ENCODE measurements at regions of chr3 and their contacts with region 1.

Region 1: GRCh38 chr3:105518806-105519418 is 152.2 kb downstream of the ALCAM start:
- DNase-seq: peak; percentile 49
- ATAC-seq: peak; percentile 96
- H3K4me3 ChIP-seq: no peak overlapping the region
- H3K27ac ChIP-seq: no peak overlapping the region
- H3K4me1 ChIP-seq: no peaks in the 10 kb centered on the region
- H3K27me3 ChIP-seq: no peaks in the 10 kb centered on the region
- CTCF ChIP-seq: peak; percentile 44 to 67 (median 54); a peak in 5 of 6 replicates
- EP300 ChIP-seq: no peak
- POLR2A ChIP-seq: no peak
- RAD21 ChIP-seq: peak; percentile 85

Region 2: DNA sequence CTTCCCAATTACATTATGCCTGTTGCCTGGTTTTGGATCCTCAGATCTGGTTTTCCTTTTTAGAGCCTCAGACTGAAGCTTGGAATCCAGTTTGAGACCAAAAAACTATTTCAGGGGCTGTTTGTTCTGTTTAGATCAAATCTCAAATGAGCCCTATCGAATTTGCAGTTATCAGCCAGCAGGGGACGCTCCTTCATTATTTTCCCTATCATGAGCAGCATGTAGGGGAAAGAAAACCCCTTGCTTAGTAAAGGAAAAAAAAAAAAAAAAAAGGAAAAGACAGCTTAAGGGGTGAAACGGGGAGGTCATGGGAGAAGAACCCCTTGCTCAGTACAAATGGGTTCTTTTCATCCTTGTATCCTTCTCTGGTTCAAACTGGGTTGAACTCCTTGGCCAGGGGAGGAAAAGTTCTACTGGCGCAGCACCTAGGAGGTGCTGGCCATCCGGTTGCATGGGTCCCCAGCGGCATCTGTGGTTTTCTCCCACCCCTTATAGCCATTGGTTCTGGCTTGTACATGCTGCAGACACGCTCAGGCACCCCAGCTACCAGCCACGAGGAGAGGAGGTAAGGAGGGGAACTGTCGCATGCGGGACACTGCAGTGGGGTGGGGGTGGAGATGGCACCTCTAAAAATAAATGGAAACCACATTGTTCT is 1527.3 kb before region 1 on chr3:
- CTCF ChIA-PET with region 1: no interaction called
- POLR2A ChIA-PET with region 1: no interaction called
- RAD21 ChIA-PET with region 1: no interaction called
- SMC1A ChIA-PET with region 1: no interaction called
- in situ Hi-C with region 1: no loop called
- intact Hi-C with region 1: loop called (anchors 5 kb)
- DNase-seq: no peak
- ATAC-seq: peak; percentile 72
- H3K4me3 ChIP-seq: no peak overlapping the region
- H3K27ac ChIP-seq: no peak overlapping the region
- H3K4me1 ChIP-seq: no peaks in the 10 kb centered on the region
- H3K27me3 ChIP-seq: no peaks in the 10 kb centered on the region
- CTCF ChIP-seq: peak; percentile 46 to 54 (median 54)
- EP300 ChIP-seq: no peak
- POLR2A ChIP-seq: no peak
- RAD21 ChIP-seq: peak; percentile 60

Region 3: DNA sequence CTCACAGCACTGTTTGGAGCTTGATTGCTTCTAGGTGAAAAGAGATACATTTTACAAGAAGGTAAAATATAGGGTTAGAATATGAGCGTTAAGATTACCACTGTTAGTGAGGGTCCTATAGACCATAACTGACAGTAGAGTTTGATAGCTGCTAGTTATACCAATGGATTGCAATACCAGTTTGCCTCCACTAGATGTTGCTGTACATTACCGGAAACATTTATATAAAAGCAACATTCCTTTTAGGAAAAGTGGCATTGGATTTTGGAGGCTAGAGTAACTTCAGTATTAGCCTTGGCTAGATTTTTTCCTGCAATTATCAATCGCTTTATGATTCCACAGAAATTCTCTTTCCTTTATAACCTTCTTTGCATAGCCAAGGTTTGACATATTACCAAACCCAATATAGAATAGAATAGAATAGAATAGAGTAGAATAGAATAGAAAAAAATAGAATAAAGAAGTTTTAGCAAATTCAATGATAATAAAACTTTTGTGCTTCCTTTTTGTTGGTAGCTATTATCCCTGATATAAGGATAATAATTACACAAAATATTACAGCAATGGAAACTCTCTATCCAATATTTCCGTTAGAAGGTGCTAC is 1245.8 kb before region 1 on chr3:
- CTCF ChIA-PET with region 1: interaction called, 8 read pairs
- POLR2A ChIA-PET with region 1: no interaction called
- RAD21 ChIA-PET with region 1: interaction called, 3 read pairs
- SMC1A ChIA-PET with region 1: interaction called, 3 read pairs
- in situ Hi-C with region 1: loop called (anchors 25 kb)
- intact Hi-C with region 1: loop called (anchors 5 kb)
- DNase-seq: no peak
- ATAC-seq: peak; percentile 58
- H3K4me3 ChIP-seq: no peak overlapping the region
- H3K27ac ChIP-seq: no peak overlapping the region
- H3K4me1 ChIP-seq: no peaks in the 10 kb centered on the region
- H3K27me3 ChIP-seq: no peaks in the 10 kb centered on the region
- CTCF ChIP-seq: peak; percentile 75 to 80 (median 77)
- EP300 ChIP-seq: no peak
- POLR2A ChIP-seq: no peak
- RAD21 ChIP-seq: peak; percentile 91

Region 4: GRCh38 chr3:104596551-104596950 is 922.4 kb before region 1 on chr3:
- CTCF ChIA-PET with region 1: interaction called, 20 read pairs
- POLR2A ChIA-PET with region 1: no interaction called
- RAD21 ChIA-PET with region 1: no interaction called
- SMC1A ChIA-PET with region 1: interaction called, 8 read pairs
- in situ Hi-C with region 1: no loop called
- intact Hi-C with region 1: loop called (anchors 5 kb)
- DNase-seq: peak; percentile 20
- ATAC-seq: peak; percentile 91
- H3K4me3 ChIP-seq: no peak overlapping the region
- H3K27ac ChIP-seq: no peak overlapping the region
- H3K4me1 ChIP-seq: no peaks in the 10 kb centered on the region
- H3K27me3 ChIP-seq: no peaks in the 10 kb centered on the region
- CTCF ChIP-seq: peak; percentile 52 to 56 (median 56)
- EP300 ChIP-seq: no peak
- POLR2A ChIP-seq: no peak
- RAD21 ChIP-seq: peak; percentile 78

Region 5: DNA sequence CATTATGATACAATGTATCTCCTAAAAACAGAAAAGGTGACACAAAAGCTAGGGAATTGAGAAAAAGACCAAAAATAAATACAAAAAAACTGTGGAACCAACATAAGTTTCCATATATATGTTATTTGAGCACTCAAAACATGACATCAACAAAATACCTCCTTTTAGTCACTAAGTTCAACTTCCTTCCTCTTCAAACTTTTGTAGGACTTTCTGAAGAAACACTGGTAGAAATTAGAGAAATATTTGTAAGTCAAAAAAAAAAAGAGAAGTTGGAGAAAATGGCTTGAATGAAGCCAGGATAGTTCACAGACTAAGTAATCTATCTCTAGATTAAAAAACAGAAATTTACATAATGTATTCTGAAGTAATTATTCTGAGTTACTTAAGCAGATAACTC is 360.6 kb before region 1 on chr3:
- CTCF ChIA-PET with region 1: no interaction called
- POLR2A ChIA-PET with region 1: no interaction called
- RAD21 ChIA-PET with region 1: no interaction called
- SMC1A ChIA-PET with region 1: no interaction called
- in situ Hi-C with region 1: no loop called
- intact Hi-C with region 1: loop called (anchors 10 kb)
- DNase-seq: no peak
- ATAC-seq: no peak
- H3K4me3 ChIP-seq: no peak overlapping the region
- H3K27ac ChIP-seq: no peak overlapping the region
- H3K4me1 ChIP-seq: no peaks in the 10 kb centered on the region
- H3K27me3 ChIP-seq: no peaks in the 10 kb centered on the region
- CTCF ChIP-seq: no peak
- EP300 ChIP-seq: no peak
- POLR2A ChIP-seq: no peak
- RAD21 ChIP-seq: no peak

Region 6: GRCh38 chr3:105505170-105505569 is 13.7 kb before region 1 on chr3:
- CTCF ChIA-PET with region 1: interaction called, 33 read pairs
- POLR2A ChIA-PET with region 1: no interaction called
- RAD21 ChIA-PET with region 1: interaction called, 9 read pairs
- SMC1A ChIA-PET with region 1: interaction called, 14 read pairs
- in situ Hi-C with region 1: no loop called
- intact Hi-C with region 1: no loop called
- DNase-seq: no peak
- ATAC-seq: no peak
- H3K4me3 ChIP-seq: no peak overlapping the region
- H3K27ac ChIP-seq: no peak overlapping the region
- H3K4me1 ChIP-seq: no peaks in the 10 kb centered on the region
- H3K27me3 ChIP-seq: no peaks in the 10 kb centered on the region
- CTCF ChIP-seq: no peak
- EP300 ChIP-seq: no peak
- POLR2A ChIP-seq: no peak
- RAD21 ChIP-seq: no peak

Region 7: GRCh38 chr3:105564546-105565288 is 45.8 kb after region 1 on chr3:
- CTCF ChIA-PET with region 1: no interaction called
- POLR2A ChIA-PET with region 1: no interaction called
- RAD21 ChIA-PET with region 1: no interaction called
- SMC1A ChIA-PET with region 1: no interaction called
- in situ Hi-C with region 1: no loop called
- intact Hi-C with region 1: no loop called
- DNase-seq: no peak
- ATAC-seq: no peak
- H3K4me3 ChIP-seq: no peak overlapping the region
- H3K27ac ChIP-seq: no peak overlapping the region
- H3K4me1 ChIP-seq: 0 out of 2 replicates have a peak, but pooled peaks cover 2% of the 10 kb centered on the region
- H3K27me3 ChIP-seq: no peaks in the 10 kb centered on the region
- CTCF ChIP-seq: no peak
- EP300 ChIP-seq: no peak
- POLR2A ChIP-seq: no peak
- RAD21 ChIP-seq: no peak